ENCODE measurements at regions of chr16 and their contacts with region 1.

Region 1: DNA sequence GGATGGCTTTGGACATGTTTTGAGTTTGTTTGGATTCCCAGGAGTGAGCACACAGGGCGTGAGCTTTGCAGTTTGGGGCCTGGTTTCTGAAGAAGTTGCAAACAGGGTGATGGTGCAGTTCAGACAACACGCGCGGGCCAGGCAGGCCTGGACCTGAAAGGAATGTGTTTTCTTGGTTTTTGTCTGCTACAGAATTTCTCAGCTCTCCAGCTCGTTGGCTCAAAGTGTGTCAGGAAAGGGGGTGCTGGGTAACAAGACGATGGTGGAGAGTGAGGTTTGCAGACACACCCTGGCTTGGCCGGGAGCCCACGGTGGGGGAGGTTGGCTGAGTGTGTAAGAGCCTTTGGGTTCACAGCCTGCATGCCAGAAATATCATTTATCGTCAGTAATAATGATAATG is 82.3 kb downstream of the CMIP start:
- DNase-seq: peak in 4 of 5 donors; percentile 44 to 71 (median 64)
- ATAC-seq: peak in 3 of 4 donors; percentile 38 to 62 (median 60)
- H3K4me3 ChIP-seq: no peak overlapping the region
- H3K27ac ChIP-seq: peak overlapping the region in 9 of 12 donors; percentile 12 to 63 (median 44)
- H3K4me1 ChIP-seq: peaks cover 0 to 60% (median 17%) of the 10 kb centered on the region in 12 donors
- H3K27me3 ChIP-seq: no peaks in the 10 kb centered on the region
- CTCF ChIP-seq: no peak
- POLR2A ChIP-seq: no peak

Region 2: DNA sequence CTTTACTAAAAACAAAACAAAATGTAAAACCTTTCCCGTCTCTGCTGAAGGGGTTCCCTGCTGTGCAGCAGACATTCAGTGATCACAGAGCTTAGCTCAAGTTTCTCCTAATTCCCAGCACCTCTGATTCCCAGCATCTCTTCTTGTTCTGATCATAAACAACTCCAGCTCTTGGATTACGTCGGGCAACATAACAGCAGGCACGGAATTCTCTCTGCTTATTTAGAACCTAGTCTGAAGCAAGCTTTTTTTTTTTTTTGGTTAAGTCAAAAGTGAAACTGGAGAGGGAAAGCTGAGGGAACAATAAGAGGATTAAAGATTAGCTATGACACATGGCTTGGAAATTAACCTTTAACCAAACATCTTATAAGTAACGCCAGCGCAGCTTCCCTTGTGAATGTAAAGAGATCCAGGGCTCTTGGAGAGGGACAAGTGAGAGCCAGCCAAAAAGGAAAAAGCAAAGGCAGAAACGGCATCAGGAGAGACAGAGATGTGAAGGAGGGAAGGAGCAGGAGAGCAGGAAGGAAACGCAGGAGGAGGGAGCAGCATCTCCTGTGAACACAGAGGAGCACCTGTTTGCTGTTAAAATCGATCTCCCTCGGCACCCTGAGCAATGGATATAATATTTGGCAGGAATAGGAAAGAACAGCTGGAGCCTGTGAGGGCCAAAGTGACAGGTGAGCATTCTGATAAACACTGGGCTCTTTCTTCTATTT is 288.5 kb before region 1 on chr16 and contains the start of gene BCO1:
- intact Hi-C with region 1: no loop called
- DNase-seq: no peak
- ATAC-seq: peak in 1 of 4 donors; percentile 6
- H3K4me3 ChIP-seq: peak within 1 kb of the TSS in 10 of 12 donors; percentile 13 to 48 (median 34)
- H3K27ac ChIP-seq: peak within 1 kb of the TSS in 11 of 12 donors; percentile 4 to 81 (median 56)
- H3K4me1 ChIP-seq: peaks cover 0 to 19% (median 2%) of the 10 kb centered on the region in 12 donors
- H3K27me3 ChIP-seq: no peaks in the 10 kb centered on the region
- CTCF ChIP-seq: no peak
- POLR2A ChIP-seq: no peak
- total RNA-seq, gene BCO1: 0.70 to 0.75 TPM in 2 of 9 donors, not detected in the others

Region 3: GRCh38 chr16:81542609-81543570 is 16.0 kb after region 1 on chr16:
- intact Hi-C with region 1: loop called in 1 of 10 experiments (anchors 2 kb)
- DNase-seq: no peak
- ATAC-seq: peak; percentile 11 to 49 (median 29)
- H3K4me3 ChIP-seq: no peak overlapping the region
- H3K27ac ChIP-seq: peak overlapping the region in 2 of 12 donors; percentile 17 to 20
- H3K4me1 ChIP-seq: peaks cover 0 to 54% (median 16%) of the 10 kb centered on the region in 12 donors
- H3K27me3 ChIP-seq: no peaks in the 10 kb centered on the region
- CTCF ChIP-seq: no peak
- POLR2A ChIP-seq: no peak

Region 4: GRCh38 chr16:81567987-81568748 is 41.2 kb after region 1 on chr16:
- intact Hi-C with region 1: no loop called
- DNase-seq: peak in 2 of 5 donors; percentile 68 to 73
- ATAC-seq: peak; percentile 43 to 94 (median 76)
- H3K4me3 ChIP-seq: no peak overlapping the region
- H3K27ac ChIP-seq: no peak overlapping the region
- H3K4me1 ChIP-seq: peaks cover 0 to 31% (median 7%) of the 10 kb centered on the region in 12 donors
- H3K27me3 ChIP-seq: no peaks in the 10 kb centered on the region
- CTCF ChIP-seq: no peak
- POLR2A ChIP-seq: no peak